Naive thymus-derived CD4-positive, alpha-beta T cell (primary cell): ENCODE measurements at regions of chr6 and their contacts with region 1.

Region 1: DNA sequence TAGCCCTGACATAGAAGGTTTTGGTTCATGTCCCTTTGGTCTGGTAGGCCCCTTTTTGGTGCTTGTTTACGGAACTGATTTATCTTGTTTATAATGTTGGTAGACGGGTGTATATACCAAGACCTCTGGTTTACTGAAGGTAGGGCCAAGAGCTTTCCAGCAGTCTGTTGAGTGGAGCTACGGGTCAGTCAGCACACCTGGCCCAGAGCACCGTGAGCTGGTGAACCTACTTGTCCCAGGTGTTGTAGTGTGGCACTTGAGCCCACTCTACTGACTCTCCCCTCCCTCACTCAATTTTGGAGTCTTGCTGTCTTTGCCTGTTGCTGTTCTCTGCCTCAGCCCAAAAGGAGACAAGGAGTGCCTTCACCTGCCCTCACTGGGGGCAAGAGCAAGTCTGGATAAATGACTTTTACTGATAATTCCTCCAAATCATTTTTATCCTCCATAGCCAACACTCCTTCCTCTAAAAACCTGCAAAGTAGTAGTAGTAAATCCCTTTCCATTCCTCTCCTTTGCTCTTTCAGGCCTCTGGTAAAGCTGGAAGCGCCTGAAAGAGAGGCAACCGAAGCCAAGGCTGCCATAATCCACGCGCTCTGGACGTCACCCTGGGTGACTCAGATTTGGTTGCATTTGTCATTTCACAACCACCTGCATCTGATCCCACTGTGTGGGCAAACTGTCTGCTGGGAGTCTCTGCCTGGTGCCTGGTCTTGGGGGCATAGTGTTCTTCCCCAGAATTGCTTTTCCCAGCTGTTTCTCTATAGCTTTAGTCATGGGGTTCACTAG is 22.2 kb downstream of the RREB1 start:
- DNase-seq: no peak
- ATAC-seq: peak; percentile 71
- H3K4me3 ChIP-seq: no peak overlapping the region
- H3K4me3 Mint-ChIP-seq: peak overlapping the region in 9 of 10 donors; percentile 50 to 73 (median 68)
- H3K27ac ChIP-seq: peak overlapping the region; percentile 52
- H3K27ac Mint-ChIP-seq: peak overlapping the region; percentile 51 to 94 (median 90)
- H3K4me1 ChIP-seq: peaks cover 7 to 45% of the 10 kb centered on the region in 2 donors
- H3K4me1 Mint-ChIP-seq: peaks cover 65 to 96% (median 89%) of the 10 kb centered on the region in 7 donors
- H3K27me3 ChIP-seq: no peaks in the 10 kb centered on the region
- H3K27me3 Mint-ChIP-seq: no peaks in the 10 kb centered on the region

Region 2: DNA sequence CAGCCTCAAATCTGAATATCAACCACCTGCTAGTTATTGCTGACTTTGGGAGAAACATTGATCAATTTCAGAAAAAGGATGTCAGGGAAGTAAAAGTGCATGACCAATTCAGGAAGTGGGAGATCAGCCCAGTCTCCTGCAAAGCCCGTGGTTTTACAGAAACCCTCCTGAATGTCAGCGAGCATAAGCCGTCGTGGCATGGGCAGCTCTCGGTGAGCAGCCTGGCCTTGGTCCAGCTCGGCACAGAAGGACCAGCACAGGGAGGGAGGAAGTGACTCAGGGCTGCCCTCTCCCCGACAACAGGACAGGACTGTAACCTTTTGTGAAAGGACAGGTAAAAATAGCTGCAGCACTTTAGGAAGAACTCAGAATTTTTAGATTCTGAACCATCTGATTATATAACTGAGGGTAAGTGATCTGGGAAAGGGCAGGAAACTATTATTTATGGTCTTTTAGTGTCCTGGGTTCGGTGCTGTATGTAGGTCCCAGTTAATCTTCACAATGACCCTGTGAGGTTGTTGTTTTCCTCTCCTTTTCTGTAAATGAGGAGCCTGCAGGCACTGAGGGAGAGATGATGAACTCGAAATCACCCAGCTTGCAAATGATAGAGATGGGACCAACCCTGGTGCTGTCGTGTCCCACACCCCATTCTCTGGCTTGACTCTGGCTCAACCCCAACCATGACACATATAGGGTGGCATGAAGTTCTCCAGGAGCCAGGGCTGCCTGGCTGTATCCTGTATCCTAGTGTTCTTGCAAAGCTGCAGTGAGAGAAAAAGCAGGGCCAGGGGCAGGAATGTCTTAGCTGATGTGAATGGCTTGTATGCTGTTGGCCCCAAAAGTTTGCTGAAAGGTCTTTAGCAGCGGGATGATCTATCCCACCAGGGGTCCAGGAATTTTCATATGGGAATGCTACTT is 1160.9 kb before region 1 on chr6:
- CTCF ChIA-PET with region 1: no interaction called
- POLR2A ChIA-PET with region 1: no interaction called
- intact Hi-C with region 1: no loop called
- DNase-seq: no peak
- ATAC-seq: no peak
- H3K4me3 ChIP-seq: no peak overlapping the region
- H3K4me3 Mint-ChIP-seq: no peak overlapping the region
- H3K27ac ChIP-seq: no peak overlapping the region
- H3K27ac Mint-ChIP-seq: no peak overlapping the region
- H3K4me1 ChIP-seq: no peaks in the 10 kb centered on the region
- H3K4me1 Mint-ChIP-seq: peaks cover 0 to 12% (median 7%) of the 10 kb centered on the region in 7 donors
- H3K27me3 ChIP-seq: no peaks in the 10 kb centered on the region
- H3K27me3 Mint-ChIP-seq: peaks cover 7 to 21% (median 12%) of the 10 kb centered on the region in 5 donors

Region 3: GRCh38 chr6:7119272-7119801 is 10.6 kb before region 1 on chr6:
- CTCF ChIA-PET with region 1: interaction called, 13 read pairs
- POLR2A ChIA-PET with region 1: interaction called, 99 read pairs
- intact Hi-C with region 1: loop called in 1 of 2 experiments (anchors 1 kb)
- DNase-seq: no peak
- ATAC-seq: no peak
- H3K4me3 ChIP-seq: no peak overlapping the region
- H3K4me3 Mint-ChIP-seq: peak overlapping the region in 2 of 10 donors; percentile 2 to 15
- H3K27ac ChIP-seq: no peak overlapping the region
- H3K27ac Mint-ChIP-seq: peak overlapping the region in 7 of 9 donors; percentile 2 to 84 (median 47)
- H3K4me1 ChIP-seq: peaks cover 0 to 24% of the 10 kb centered on the region in 2 donors
- H3K4me1 Mint-ChIP-seq: peaks cover 34 to 83% (median 65%) of the 10 kb centered on the region in 7 donors
- H3K27me3 ChIP-seq: no peaks in the 10 kb centered on the region
- H3K27me3 Mint-ChIP-seq: no peaks in the 10 kb centered on the region

Region 4: GRCh38 chr6:7140631-7141378 is 10.8 kb after region 1 on chr6:
- CTCF ChIA-PET with region 1: interaction called, 11 read pairs
- POLR2A ChIA-PET with region 1: interaction called, 91 read pairs
- intact Hi-C with region 1: loop called (anchors 1 kb)
- DNase-seq: peak; percentile 69 to 86 (median 78)
- ATAC-seq: peak; percentile 89
- H3K4me3 ChIP-seq: peak overlapping the region; percentile 73
- H3K4me3 Mint-ChIP-seq: peak overlapping the region; percentile 80 to 92 (median 88)
- H3K27ac ChIP-seq: peak overlapping the region; percentile 91
- H3K27ac Mint-ChIP-seq: peak overlapping the region; percentile 85 to 99 (median 96)
- H3K4me1 ChIP-seq: peaks cover 22 to 51% of the 10 kb centered on the region in 2 donors
- H3K4me1 Mint-ChIP-seq: peaks cover 45 to 91% (median 85%) of the 10 kb centered on the region in 7 donors
- H3K27me3 ChIP-seq: no peaks in the 10 kb centered on the region
- H3K27me3 Mint-ChIP-seq: no peaks in the 10 kb centered on the region

Region 5: GRCh38 chr6:7145885-7146828 is 16.2 kb after region 1 on chr6:
- CTCF ChIA-PET with region 1: interaction called, 3 read pairs
- POLR2A ChIA-PET with region 1: interaction called, 91 read pairs
- intact Hi-C with region 1: loop called (anchors 2 kb)
- DNase-seq: no peak
- ATAC-seq: peak; percentile 71
- H3K4me3 ChIP-seq: peak overlapping the region; percentile 10
- H3K4me3 Mint-ChIP-seq: peak overlapping the region; percentile 70 to 83 (median 82)
- H3K27ac ChIP-seq: peak overlapping the region; percentile 63
- H3K27ac Mint-ChIP-seq: peak overlapping the region; percentile 55 to 96 (median 89)
- H3K4me1 ChIP-seq: peaks cover 17 to 27% of the 10 kb centered on the region in 2 donors
- H3K4me1 Mint-ChIP-seq: peaks cover 50 to 89% (median 76%) of the 10 kb centered on the region in 7 donors
- H3K27me3 ChIP-seq: no peaks in the 10 kb centered on the region
- H3K27me3 Mint-ChIP-seq: no peaks in the 10 kb centered on the region

Region 6: GRCh38 chr6:7725849-7726415 is 596.0 kb after region 1 on chr6 and contains the start of gene BMP6:
- CTCF ChIA-PET with region 1: no interaction called
- POLR2A ChIA-PET with region 1: no interaction called
- intact Hi-C with region 1: no loop called
- DNase-seq: peak in 7 of 9 donors; percentile 10 to 73 (median 24)
- ATAC-seq: peak; percentile 79
- H3K4me3 ChIP-seq: peak within 1 kb of the TSS; percentile 20
- H3K4me3 Mint-ChIP-seq: peak within 1 kb of the TSS; percentile 58 to 90 (median 79)
- H3K27ac ChIP-seq: no peak within 1 kb of the TSS
- H3K27ac Mint-ChIP-seq: no peak within 1 kb of the TSS
- H3K4me1 ChIP-seq: peaks cover 0 to 7% of the 10 kb centered on the region in 2 donors
- H3K4me1 Mint-ChIP-seq: peaks cover 13 to 24% (median 22%) of the 10 kb centered on the region in 7 donors
- H3K27me3 ChIP-seq: peaks cover 8 to 20% of the 10 kb centered on the region in 2 donors
- H3K27me3 Mint-ChIP-seq: peaks cover 61 to 78% (median 62%) of the 10 kb centered on the region in 5 donors
- total RNA-seq, gene BMP6: 0.37 to 0.56 TPM in 2 of 5 experiments, not detected in the others